ENCODE measurements at regions of chr10 and their contacts with region 1.

Region 1: DNA sequence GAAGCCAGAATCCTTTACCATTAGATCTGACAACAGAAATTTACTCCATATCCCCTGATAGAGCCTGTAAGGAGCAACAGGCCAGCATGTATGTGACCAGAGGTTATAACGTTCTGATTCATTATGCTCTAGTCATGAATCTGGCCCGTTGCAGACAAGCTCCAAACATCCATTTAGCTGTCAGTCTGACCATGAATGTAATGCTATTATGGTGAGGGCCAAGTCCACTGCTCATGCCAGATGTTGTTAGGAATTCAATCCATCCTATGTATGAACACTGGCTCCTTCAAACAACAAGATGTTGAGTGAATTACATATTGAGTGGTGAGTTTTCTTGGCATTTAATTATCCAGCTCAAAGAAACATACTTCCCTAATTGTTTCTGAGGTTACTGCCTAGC is 610.1 kb upstream of the ANKRD30A start:
- DNase-seq: no peak
- H3K4me3 ChIP-seq: no peak overlapping the region
- H3K27ac ChIP-seq: peak overlapping the region; percentile 53
- H3K4me1 ChIP-seq: peaks cover 30% of the 10 kb centered on the region
- H3K27me3 ChIP-seq: no peaks in the 10 kb centered on the region
- CTCF ChIP-seq: no peak

Region 2: DNA sequence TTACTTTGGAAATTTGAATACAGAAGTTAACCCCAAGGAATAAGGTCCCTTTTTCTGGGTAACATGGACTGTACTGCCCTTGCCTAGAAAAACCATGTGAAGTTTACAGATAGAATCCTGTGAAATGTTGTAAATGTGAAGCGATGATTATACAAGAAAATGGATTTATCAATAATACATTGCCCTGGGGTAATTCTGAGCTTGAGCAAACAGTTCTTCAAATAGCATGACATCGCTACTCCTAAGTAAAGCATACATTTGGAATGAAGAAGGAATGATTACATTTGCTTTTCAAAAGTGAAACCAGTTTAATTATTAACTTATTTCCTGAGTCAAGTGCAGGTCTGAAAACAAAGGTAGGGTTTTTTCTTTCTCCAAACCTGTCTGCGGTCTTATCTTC is 829.9 kb before region 1 on chr10:
- CTCF ChIA-PET with region 1: no interaction called
- POLR2A ChIA-PET with region 1: no interaction called
- intact Hi-C with region 1: no loop called
- DNase-seq: no peak
- H3K4me3 ChIP-seq: no peak overlapping the region
- H3K27ac ChIP-seq: no peak overlapping the region
- H3K4me1 ChIP-seq: no peaks in the 10 kb centered on the region
- H3K27me3 ChIP-seq: no peaks in the 10 kb centered on the region
- CTCF ChIP-seq: no peak

Region 3: DNA sequence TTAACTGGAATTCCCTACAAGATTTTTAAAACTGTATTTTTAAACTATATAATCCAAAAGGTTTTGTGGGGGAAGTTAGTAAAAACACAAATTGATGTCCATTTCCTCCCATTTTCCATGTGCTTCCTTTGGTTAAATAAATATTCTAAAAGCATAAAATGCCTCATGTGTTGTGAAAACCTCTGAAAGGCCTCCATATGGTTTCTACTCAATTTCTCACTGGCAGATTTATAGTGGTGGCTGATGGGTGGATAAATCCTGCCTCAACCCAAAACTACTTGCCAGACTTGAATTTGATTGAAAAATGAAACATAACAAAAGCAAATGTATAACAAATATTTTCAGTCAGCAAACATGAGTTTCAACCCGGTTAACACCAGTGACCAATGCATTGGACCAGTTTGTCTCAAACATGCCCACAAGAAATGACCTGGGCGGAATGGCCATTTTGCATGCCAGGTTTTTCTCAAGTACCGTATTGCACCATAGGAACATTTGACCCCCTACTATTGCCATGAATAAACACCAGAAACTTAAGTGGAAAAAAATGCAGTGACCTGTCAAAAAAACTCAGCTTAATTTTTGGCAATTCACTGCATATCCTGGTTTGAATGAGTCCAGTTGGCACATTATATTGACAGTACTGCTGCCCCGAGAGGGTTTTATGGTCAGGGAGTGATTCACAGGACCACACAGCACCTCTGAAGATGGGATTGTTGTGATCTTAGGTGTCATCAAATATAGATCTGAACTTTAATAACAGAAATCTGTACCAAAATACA is 155.5 kb after region 1 on chr10:
- CTCF ChIA-PET with region 1: no interaction called
- POLR2A ChIA-PET with region 1: no interaction called
- intact Hi-C with region 1: loop called (anchors 1 kb)
- DNase-seq: peak; percentile 42
- H3K4me3 ChIP-seq: no peak overlapping the region
- H3K27ac ChIP-seq: peak overlapping the region; percentile 20
- H3K4me1 ChIP-seq: peaks cover 19% of the 10 kb centered on the region
- H3K27me3 ChIP-seq: no peaks in the 10 kb centered on the region
- CTCF ChIP-seq: no peak